ENCODE measurements at regions of chr5 and their contacts with region 1.

Region 1: DNA sequence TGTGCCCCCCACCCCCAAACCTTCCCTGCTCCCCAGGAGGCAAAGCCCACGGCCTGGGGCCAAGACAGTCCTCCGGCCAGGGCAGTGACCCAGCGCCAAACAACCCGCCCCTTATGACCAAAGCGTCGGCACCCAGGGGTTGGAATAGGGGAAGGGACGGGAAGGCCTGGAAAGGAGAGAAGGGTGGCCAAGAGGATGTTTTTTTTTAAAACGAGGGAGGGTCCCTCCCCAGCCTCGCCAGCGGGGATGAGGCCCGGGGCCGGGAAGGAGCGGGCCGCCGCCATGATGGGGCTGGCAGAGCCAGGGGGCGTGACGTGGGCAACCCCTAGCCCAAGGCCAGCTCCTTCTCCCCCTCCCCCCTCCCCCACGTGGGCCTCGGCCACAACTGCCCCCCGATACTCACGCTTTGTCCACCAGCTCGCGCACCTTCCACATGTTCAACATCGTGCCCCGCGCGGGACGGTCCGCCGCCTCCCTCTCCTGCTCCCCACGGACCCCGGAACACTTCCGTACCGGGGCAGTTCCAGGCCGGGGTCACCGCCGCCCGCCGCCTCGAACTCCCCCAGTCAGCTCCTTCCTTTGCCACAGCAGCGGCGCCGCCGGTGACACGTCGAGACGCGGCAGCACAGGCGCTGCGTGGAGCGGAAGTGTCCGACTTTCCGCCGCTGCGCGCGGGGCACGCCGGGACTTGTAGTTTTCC is at the start of gene CLINT1:
- DNase-seq: peak; percentile 82
- H3K4me3 ChIP-seq: peak within 1 kb of the TSS; percentile 87 to 93
- H3K27ac ChIP-seq: peak within 1 kb of the TSS; percentile 72 to 80
- H3K4me1 ChIP-seq: peaks cover 4% of the 10 kb centered on the region
- H3K27me3 ChIP-seq: no peaks in the 10 kb centered on the region
- CTCF ChIP-seq: peak in 1 of 4 experiments; percentile 30
- POLR2A ChIP-seq: peak; percentile 82
- total RNA-seq, gene CLINT1: 65.1 to 84.5 TPM

Region 2: GRCh38 chr5:157917899-157918809 is 59.5 kb after region 1 on chr5:
- intact Hi-C with region 1: loop called (anchors 10 kb)
- DNase-seq: peak; percentile 17
- H3K4me3 ChIP-seq: no peak overlapping the region
- H3K27ac ChIP-seq: peak overlapping the region in 1 of 2 donors; percentile 30
- H3K4me1 ChIP-seq: no peaks in the 10 kb centered on the region
- H3K27me3 ChIP-seq: no peaks in the 10 kb centered on the region
- CTCF ChIP-seq: peak in 2 of 4 experiments; percentile 14 to 50
- POLR2A ChIP-seq: no peak

Region 3: GRCh38 chr5:157948738-157949410 is 90.2 kb after region 1 on chr5:
- intact Hi-C with region 1: loop called (anchors 2 kb)
- DNase-seq: peak; percentile 91
- H3K4me3 ChIP-seq: no peak overlapping the region
- H3K27ac ChIP-seq: peak overlapping the region; percentile 35
- H3K4me1 ChIP-seq: no peaks in the 10 kb centered on the region
- H3K27me3 ChIP-seq: no peaks in the 10 kb centered on the region
- CTCF ChIP-seq: peak; percentile 61 to 90 (median 84)
- POLR2A ChIP-seq: no peak

Region 4: DNA sequence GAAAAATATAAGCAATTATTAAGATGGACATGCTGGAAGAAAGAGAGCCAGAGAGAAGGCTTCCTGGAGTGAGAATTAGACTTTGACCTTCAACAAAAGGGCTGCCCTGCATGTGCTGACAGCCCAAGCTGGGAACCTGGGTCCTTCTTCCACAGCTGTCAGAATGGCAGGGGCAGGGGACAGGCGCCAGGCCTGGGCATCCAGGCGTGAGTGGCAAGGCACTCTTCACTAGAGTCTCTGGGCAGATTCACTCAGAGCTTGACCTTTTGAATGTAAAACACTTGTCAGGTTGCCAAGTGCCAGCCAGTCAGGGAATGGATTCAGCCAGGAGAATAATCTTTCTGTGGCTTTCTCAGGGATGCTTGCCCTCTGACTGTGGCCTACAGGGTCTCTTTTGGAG is 119.4 kb after region 1 on chr5:
- intact Hi-C with region 1: no loop called
- DNase-seq: no peak
- H3K4me3 ChIP-seq: no peak overlapping the region
- H3K27ac ChIP-seq: no peak overlapping the region
- H3K4me1 ChIP-seq: no peaks in the 10 kb centered on the region
- H3K27me3 ChIP-seq: no peaks in the 10 kb centered on the region
- CTCF ChIP-seq: no peak
- POLR2A ChIP-seq: no peak

Region 5: GRCh38 chr5:157994906-157995519 is 136.3 kb after region 1 on chr5:
- intact Hi-C with region 1: loop called (anchors 5 kb)
- DNase-seq: peak; percentile 49
- H3K4me3 ChIP-seq: no peak overlapping the region
- H3K27ac ChIP-seq: no peak overlapping the region
- H3K4me1 ChIP-seq: no peaks in the 10 kb centered on the region
- H3K27me3 ChIP-seq: no peaks in the 10 kb centered on the region
- CTCF ChIP-seq: peak; percentile 19 to 72 (median 54)
- POLR2A ChIP-seq: no peak

Measured in prostate gland (tissue), 2 donors.